SK-N-SH (cell line): ENCODE measurements at regions of chr14 and their contacts with region 1.

Region 1: GRCh38 chr14:74945823-74946682 is 9.3 kb downstream of the PGF start:
- DNase-seq: peak; percentile 95
- H3K4me3 ChIP-seq: peak overlapping the region in 1 of 2 experiments; percentile 23; a peak in 1 of 4 replicates
- H3K27ac ChIP-seq: peak overlapping the region in 1 of 2 experiments; percentile 11; a peak in 1 of 4 replicates
- H3K4me1 ChIP-seq: peaks cover 6 to 8% of the 10 kb centered on the region in 2 experiments; a peak in 1 of 4 replicates
- H3K27me3 ChIP-seq: no peaks in the 10 kb centered on the region
- CTCF ChIP-seq: peak; percentile 88
- EP300 ChIP-seq: no peak
- RAD21 ChIP-seq: peak; percentile 92

Region 2: DNA sequence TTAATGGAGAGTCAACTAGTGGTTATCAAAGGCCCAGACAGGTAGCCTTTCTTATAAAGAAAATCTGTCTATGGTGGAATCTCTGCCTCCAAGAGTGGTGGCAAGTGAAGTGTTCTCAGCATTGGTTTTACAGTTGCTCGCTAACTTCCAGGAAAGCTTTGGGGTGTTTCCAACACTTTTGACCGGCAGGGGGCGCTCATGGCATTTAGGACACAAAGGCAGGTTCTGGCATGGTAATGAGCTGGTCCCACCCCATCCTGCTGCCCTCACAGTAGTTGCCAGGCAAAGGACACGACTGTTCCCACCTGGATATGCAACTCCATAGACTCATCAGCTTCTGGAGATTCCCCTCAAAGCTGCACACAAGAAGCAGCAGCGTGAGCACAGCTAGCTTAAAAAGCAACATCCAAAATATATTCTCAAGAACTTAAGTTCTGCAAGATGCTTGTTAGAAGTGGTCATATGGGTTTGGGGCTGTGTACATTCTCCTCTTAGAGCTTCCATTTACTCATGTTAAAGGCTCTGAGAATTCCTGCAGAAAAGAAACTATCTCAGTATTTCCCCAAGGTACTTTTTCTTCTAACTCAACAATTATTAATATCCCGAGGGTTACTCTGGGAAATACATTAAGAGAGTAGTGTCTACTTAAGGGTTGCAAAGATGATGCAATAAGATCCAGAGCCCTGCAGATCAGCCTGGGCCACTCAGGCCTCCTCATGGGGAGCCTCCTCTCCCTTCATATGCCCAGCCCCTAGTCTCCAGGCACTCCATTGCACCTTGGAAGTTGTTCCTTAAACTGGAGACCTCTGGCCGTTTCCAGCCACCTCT is 84.9 kb before region 1 on chr14:
- CTCF ChIA-PET with region 1: interaction called, 23 read pairs
- POLR2A ChIA-PET with region 1: no interaction called
- DNase-seq: peak; percentile 82
- H3K4me3 ChIP-seq: no peak overlapping the region
- H3K27ac ChIP-seq: no peak overlapping the region
- H3K4me1 ChIP-seq: no peaks in the 10 kb centered on the region; a peak in 1 of 4 replicates
- H3K27me3 ChIP-seq: no peaks in the 10 kb centered on the region
- CTCF ChIP-seq: peak; percentile 87
- EP300 ChIP-seq: no peak
- RAD21 ChIP-seq: peak; percentile 94

Region 3: DNA sequence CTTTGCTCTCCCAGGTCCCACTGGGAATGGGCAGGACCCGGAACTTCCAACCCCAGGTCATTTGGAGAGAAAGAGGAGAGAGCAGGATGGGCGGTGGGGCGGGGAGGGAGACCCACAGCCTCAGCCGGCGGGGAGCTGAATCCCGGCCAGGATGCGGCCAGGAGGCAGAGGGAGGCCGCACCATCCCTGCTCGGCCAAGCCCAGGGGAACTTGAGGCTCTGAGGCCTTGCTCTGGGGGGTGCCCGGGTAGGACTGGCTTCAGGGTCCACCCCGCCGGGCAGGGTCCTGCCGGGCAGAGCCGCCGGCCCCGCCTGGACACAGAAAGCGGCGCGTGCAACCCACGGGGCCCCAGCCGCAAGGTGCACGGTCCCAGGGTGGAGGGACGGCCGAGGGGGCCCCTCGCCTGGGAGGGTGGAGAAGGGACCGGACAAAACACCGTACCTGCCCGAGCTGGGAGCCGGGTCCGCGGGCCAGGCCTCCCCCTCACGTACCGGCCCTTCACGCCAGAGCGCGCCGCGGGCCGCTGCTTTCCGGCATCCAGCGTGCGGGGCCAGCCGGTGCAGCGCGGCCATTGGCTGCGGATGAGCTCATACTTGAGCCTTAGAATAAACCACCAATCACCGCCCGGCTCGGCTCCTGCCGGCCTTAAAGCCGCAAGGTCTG is 23.2 kb before region 1 on chr14 and contains the start of gene RPS6KL1:
- CTCF ChIA-PET with region 1: interaction called, 17 read pairs
- POLR2A ChIA-PET with region 1: no interaction called
- DNase-seq: peak; percentile 98
- H3K4me3 ChIP-seq: peak within 1 kb of the TSS; percentile 52 to 61
- H3K27ac ChIP-seq: no peak within 1 kb of the TSS
- H3K4me1 ChIP-seq: no peaks in the 10 kb centered on the region; a peak in 1 of 4 replicates
- H3K27me3 ChIP-seq: peaks cover 6% of the 10 kb centered on the region; the same call in 1 of the 2 replicates
- CTCF ChIP-seq: no peak
- EP300 ChIP-seq: no peak
- RAD21 ChIP-seq: no peak
- polyA plus RNA-seq, gene RPS6KL1: 2.5 and 4.4 TPM in 2 replicates

Region 4: DNA sequence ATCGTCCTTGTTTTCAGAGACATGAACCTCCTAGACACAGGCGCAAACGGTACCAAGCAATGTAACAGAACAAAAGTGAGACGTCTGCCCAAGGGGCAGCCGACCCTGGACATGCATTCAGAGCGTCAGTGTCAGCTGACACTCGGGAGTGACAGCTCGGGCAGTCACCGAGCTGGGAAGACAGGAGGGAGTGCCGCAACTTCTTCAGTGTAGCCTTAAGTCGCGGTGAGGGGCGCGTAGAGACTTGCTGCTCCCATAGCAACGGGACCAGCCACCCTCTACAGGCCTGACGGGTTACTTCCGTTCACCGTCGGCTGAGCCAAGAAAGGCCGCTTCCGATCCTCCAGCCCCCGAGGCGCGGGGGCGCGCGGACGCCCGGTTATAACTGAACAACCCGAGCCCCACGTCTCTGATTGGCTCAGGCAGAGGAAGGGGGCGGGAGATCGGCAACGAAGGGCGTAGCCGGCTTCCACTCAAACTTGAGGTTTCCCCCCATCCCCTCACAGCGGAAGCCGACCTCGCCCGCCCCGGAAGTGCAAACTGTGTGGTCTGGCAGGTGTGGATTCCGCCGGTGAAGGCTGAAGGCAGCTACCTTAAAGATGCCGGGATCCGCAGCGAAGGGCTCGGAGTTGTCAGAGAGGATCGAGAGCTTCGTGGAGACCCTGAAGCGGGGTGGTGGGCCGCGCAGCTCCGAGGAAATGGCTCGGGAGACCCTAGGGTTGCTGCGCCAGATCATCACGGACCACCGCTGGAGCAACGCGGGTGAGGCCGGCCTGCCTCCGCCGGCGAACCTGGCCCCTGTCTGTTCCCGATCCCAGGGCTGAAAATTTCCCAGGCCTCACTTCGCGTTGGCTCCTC is 56.6 kb after region 1 on chr14 and contains the start of gene EIF2B2:
- CTCF ChIA-PET with region 1: interaction called, 44 read pairs
- POLR2A ChIA-PET with region 1: no interaction called
- DNase-seq: peak; percentile 97
- H3K4me3 ChIP-seq: peak within 1 kb of the TSS; percentile 86 to 96
- H3K27ac ChIP-seq: peak within 1 kb of the TSS; percentile 70 to 91
- H3K4me1 ChIP-seq: peaks cover 7 to 18% of the 10 kb centered on the region in 2 experiments; a peak in 3 of 4 replicates
- H3K27me3 ChIP-seq: no peaks in the 10 kb centered on the region
- CTCF ChIP-seq: no peak
- EP300 ChIP-seq: no peak; a peak in 1 of 4 replicates
- RAD21 ChIP-seq: peak; percentile 39
- polyA plus RNA-seq, gene EIF2B2: 111 and 125 TPM in 2 replicates

Region 5: GRCh38 chr14:75044322-75044721 is 98.3 kb after region 1 on chr14:
- CTCF ChIA-PET with region 1: interaction called, 12 read pairs
- POLR2A ChIA-PET with region 1: no interaction called
- DNase-seq: no peak
- H3K4me3 ChIP-seq: peak overlapping the region in 1 of 2 experiments; percentile 20; a peak in 1 of 4 replicates
- H3K27ac ChIP-seq: peak overlapping the region; percentile 7 to 58; a peak in 3 of 4 replicates
- H3K4me1 ChIP-seq: peaks cover 24 to 25% of the 10 kb centered on the region in 2 experiments; a peak in 3 of 4 replicates
- H3K27me3 ChIP-seq: no peaks in the 10 kb centered on the region
- CTCF ChIP-seq: no peak
- EP300 ChIP-seq: no peak
- RAD21 ChIP-seq: no peak

Region 6: GRCh38 chr14:75069045-75069810 is 123.2 kb after region 1 on chr14 and contains the start of gene ZC2HC1C:
- CTCF ChIA-PET with region 1: interaction called, 15 read pairs
- POLR2A ChIA-PET with region 1: no interaction called
- DNase-seq: peak; percentile 97
- H3K4me3 ChIP-seq: peak within 1 kb of the TSS; percentile 59 to 69
- H3K27ac ChIP-seq: peak within 1 kb of the TSS; percentile 84 to 98
- H3K4me1 ChIP-seq: peaks cover 0 to 11% of the 10 kb centered on the region in 2 experiments; a peak in 1 of 4 replicates
- H3K27me3 ChIP-seq: no peaks in the 10 kb centered on the region
- CTCF ChIP-seq: no peak
- EP300 ChIP-seq: peak in 1 of 2 experiments; percentile 25; a peak in 2 of 4 replicates
- RAD21 ChIP-seq: peak; percentile 9; the same call in 1 of the 2 replicates
- polyA plus RNA-seq, gene ZC2HC1C: 1.2 and 1.4 TPM in 2 replicates